IMR-90 (cell line): ENCODE measurements at regions of chr13 and their contacts with region 1.

Region 1: GRCh38 chr13:30132623-30133553 is 174.5 kb downstream of the KATNAL1 start:
- DNase-seq: peak; percentile 89
- ATAC-seq: peak; percentile 99
- H3K4me3 ChIP-seq: no peak overlapping the region
- H3K27ac ChIP-seq: no peak overlapping the region
- H3K4me1 ChIP-seq: peaks cover 8% of the 10 kb centered on the region
- H3K27me3 ChIP-seq: 0 out of 2 replicates have a peak, but pooled peaks cover 2% of the 10 kb centered on the region
- CTCF ChIP-seq: peak; percentile 94
- POLR2A ChIP-seq: peak; percentile 43; the same call in 1 of the 2 replicates
- RAD21 ChIP-seq: peak; percentile 96

Region 2: DNA sequence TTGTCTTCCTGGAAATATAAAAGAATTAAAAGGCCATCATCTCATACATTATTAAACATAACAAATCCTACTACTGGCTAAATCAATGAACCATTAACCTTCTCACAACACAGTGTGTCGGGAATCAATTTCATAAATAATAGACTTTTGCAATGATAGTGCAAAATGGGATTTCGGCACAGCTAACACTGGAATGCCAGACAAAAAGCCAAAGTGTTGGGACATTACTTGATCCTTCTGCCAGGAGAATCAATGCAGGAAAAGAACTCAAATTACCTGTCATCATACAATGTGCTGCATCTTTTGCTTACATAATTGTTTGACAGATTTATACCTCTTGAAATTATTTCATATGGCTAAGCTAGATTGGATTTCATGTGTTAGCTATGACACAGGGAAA is 978.5 kb before region 1 on chr13:
- CTCF ChIA-PET with region 1: no interaction called
- POLR2A ChIA-PET with region 1: no interaction called
- dilution Hi-C with region 1: no loop called
- in situ Hi-C with region 1: no loop called
- intact Hi-C with region 1: no loop called
- DNase-seq: no peak
- ATAC-seq: no peak
- H3K4me3 ChIP-seq: no peak overlapping the region
- H3K27ac ChIP-seq: no peak overlapping the region
- H3K4me1 ChIP-seq: no peaks in the 10 kb centered on the region
- H3K27me3 ChIP-seq: no peaks in the 10 kb centered on the region
- CTCF ChIP-seq: no peak
- POLR2A ChIP-seq: no peak
- RAD21 ChIP-seq: no peak

Region 3: DNA sequence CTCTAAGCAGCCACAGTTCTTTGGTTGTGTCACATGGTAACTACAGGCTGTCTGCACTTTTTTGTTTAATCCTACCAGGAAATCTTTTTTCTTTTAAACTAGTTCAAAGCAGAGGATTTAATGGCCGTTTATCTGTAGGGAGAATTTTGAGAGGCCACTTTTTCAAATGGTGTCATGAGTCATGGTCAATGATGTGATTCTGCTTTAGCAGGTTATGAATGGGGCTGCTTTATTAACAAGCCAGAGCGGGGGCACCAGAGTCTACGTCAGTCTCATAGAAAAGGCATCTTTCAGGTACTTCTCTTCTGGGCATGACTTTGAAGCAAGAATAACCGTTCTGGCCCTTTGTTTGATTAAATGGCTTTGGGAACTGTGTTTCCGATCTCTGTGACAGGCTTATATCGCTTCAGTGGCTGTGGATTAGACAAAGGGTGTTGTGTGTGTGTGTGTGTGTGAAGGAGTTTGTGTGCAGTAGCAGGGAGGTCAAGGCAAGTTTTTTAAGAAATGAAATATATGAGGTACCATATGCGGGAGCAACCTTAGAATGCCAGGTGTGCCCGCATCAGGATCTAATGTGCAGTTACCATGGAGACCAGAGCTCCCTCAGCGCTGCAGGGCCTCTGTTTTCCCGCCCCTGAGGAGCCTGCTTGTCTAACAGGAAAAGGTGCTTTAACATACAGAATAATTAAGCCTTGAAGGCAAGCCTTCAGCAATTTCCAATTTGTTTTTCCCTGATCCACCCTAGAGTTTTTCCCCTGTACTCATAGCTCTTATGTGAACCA is 53.9 kb after region 1 on chr13:
- CTCF ChIA-PET with region 1: no interaction called
- POLR2A ChIA-PET with region 1: no interaction called
- dilution Hi-C with region 1: no loop called
- in situ Hi-C with region 1: no loop called
- intact Hi-C with region 1: no loop called
- DNase-seq: peak; percentile 7
- ATAC-seq: no peak
- H3K4me3 ChIP-seq: no peak overlapping the region
- H3K27ac ChIP-seq: no peak overlapping the region
- H3K4me1 ChIP-seq: no peaks in the 10 kb centered on the region
- H3K27me3 ChIP-seq: no peaks in the 10 kb centered on the region
- CTCF ChIP-seq: no peak
- POLR2A ChIP-seq: no peak
- RAD21 ChIP-seq: no peak

Region 4: DNA sequence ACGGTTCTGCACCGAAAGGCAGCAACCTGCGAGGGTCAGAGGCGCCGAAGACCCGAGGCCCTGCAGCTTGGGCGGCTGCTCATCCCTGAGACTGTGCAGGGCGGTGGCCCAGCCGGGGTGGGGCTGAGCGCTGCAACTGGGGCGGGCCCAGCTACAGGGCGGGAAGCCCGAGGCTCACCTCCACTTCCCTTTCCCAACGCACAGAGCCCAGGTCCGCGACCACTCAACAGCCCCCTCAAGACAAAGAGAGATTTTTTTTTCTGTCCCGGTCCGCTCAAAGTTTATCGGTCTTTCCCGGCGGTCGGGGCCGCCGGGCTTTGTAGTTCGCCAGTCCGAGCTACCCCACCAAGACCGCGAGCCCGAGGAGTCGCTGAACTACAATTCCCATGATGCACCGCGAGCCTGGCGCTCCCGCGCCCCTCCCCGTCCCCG is 173.9 kb after region 1 on chr13:
- CTCF ChIA-PET with region 1: interaction called, 8 read pairs
- POLR2A ChIA-PET with region 1: no interaction called
- dilution Hi-C with region 1: no loop called
- in situ Hi-C with region 1: no loop called
- intact Hi-C with region 1: loop called (anchors 10 kb)
- DNase-seq: peak; percentile 91
- ATAC-seq: peak; percentile 96
- H3K4me3 ChIP-seq: peak overlapping the region; percentile 81
- H3K27ac ChIP-seq: peak overlapping the region; percentile 87
- H3K4me1 ChIP-seq: peaks cover 7% of the 10 kb centered on the region
- H3K27me3 ChIP-seq: no peaks in the 10 kb centered on the region
- CTCF ChIP-seq: no peak
- POLR2A ChIP-seq: peak; percentile 9; the same call in 1 of the 2 replicates
- RAD21 ChIP-seq: no peak

Region 5: GRCh38 chr13:30395192-30396084 is 262.6 kb after region 1 on chr13:
- CTCF ChIA-PET with region 1: no interaction called
- POLR2A ChIA-PET with region 1: no interaction called
- dilution Hi-C with region 1: no loop called
- in situ Hi-C with region 1: no loop called
- intact Hi-C with region 1: loop called (anchors 5 kb)
- DNase-seq: peak; percentile 93
- ATAC-seq: peak; percentile 85
- H3K4me3 ChIP-seq: peak overlapping the region; percentile 54
- H3K27ac ChIP-seq: peak overlapping the region; percentile 91
- H3K4me1 ChIP-seq: no peaks in the 10 kb centered on the region
- H3K27me3 ChIP-seq: no peaks in the 10 kb centered on the region
- CTCF ChIP-seq: no peak
- POLR2A ChIP-seq: no peak
- RAD21 ChIP-seq: no peak

Region 6: GRCh38 chr13:30465585-30466357 is 332.9 kb after region 1 on chr13 and contains the start of gene HMGB1:
- CTCF ChIA-PET with region 1: interaction called, 13 read pairs
- POLR2A ChIA-PET with region 1: no interaction called
- dilution Hi-C with region 1: no loop called
- in situ Hi-C with region 1: no loop called
- intact Hi-C with region 1: loop called (anchors 1 kb)
- DNase-seq: peak; percentile 99
- ATAC-seq: peak; percentile 89
- H3K4me3 ChIP-seq: peak within 1 kb of the TSS; percentile 74
- H3K27ac ChIP-seq: peak within 1 kb of the TSS; percentile 87
- H3K4me1 ChIP-seq: peaks cover 3% of the 10 kb centered on the region
- H3K27me3 ChIP-seq: no peaks in the 10 kb centered on the region
- CTCF ChIP-seq: no peak
- POLR2A ChIP-seq: peak; percentile 93
- RAD21 ChIP-seq: no peak
- total RNA-seq, gene HMGB1: 276 and 480 TPM in 2 replicates

Region 7: DNA sequence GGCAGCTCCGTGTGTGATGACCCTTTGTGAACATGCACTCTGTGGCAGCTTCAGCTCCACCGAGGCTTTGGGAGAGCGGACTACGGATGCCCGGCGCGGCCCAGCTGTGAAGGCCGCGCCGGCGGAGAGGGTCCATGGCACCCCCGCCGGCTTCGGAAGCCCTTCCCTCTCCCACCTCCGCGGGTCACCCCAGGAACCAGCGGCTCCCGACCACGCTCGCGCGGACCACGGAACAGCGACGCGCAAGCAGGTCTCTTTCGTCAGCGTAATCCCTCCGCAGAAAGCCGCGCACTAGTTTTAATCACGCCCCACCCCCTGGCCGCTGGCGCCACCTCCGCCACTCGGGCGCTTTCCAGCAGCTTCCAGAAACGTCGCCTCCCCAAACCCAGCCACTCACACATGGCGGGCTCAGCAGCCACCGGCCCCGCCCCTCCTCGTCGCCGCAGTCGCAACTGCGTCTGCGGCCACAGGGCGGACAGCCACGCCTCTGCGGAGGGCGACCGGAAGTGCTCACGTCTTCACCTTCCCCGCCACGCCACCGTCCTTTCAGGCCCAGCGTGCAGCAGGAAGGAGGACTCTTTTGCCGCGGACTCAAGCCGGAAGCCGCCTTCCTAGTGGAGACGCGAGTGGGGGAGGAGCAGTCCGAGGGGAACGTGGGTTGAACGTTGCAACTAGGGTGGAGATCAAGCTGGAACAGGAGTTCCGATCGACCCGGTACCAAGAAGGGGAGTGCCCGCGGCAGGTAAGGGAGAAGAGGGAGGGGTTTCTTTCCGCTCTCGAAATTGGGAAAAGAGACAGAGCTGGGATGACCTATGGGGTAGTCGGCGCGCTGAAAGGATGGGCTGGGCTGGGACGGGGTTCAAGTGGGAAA is 484.7 kb after region 1 on chr13 and contains the start of gene USPL1:
- CTCF ChIA-PET with region 1: interaction called, 4 read pairs
- POLR2A ChIA-PET with region 1: no interaction called
- dilution Hi-C with region 1: no loop called
- in situ Hi-C with region 1: no loop called
- intact Hi-C with region 1: loop called (anchors 2 kb)
- DNase-seq: peak; percentile 99
- ATAC-seq: peak; percentile 94
- H3K4me3 ChIP-seq: peak within 1 kb of the TSS; percentile 72
- H3K27ac ChIP-seq: peak within 1 kb of the TSS; percentile 92
- H3K4me1 ChIP-seq: no peaks in the 10 kb centered on the region; the same call in 1 of the 2 replicates
- H3K27me3 ChIP-seq: no peaks in the 10 kb centered on the region
- CTCF ChIP-seq: peak; percentile 22; the same call in 1 of the 2 replicates
- POLR2A ChIP-seq: peak; percentile 92
- RAD21 ChIP-seq: peak; percentile 31; the same call in 1 of the 2 replicates
- total RNA-seq, gene USPL1: 15.4 and 22.5 TPM in 2 replicates

Region 8: GRCh38 chr13:30802953-30803478 is 670.1 kb after region 1 on chr13:
- CTCF ChIA-PET with region 1: no interaction called
- POLR2A ChIA-PET with region 1: no interaction called
- dilution Hi-C with region 1: no loop called
- in situ Hi-C with region 1: loop called (anchors 10 kb)
- intact Hi-C with region 1: loop called (anchors 5 kb)
- DNase-seq: peak; percentile 70
- ATAC-seq: peak; percentile 88
- H3K4me3 ChIP-seq: no peak overlapping the region
- H3K27ac ChIP-seq: peak overlapping the region; percentile 10
- H3K4me1 ChIP-seq: peaks cover 24% of the 10 kb centered on the region
- H3K27me3 ChIP-seq: no peaks in the 10 kb centered on the region
- CTCF ChIP-seq: peak; percentile 89
- POLR2A ChIP-seq: no peak
- RAD21 ChIP-seq: peak; percentile 98

Region 9: DNA sequence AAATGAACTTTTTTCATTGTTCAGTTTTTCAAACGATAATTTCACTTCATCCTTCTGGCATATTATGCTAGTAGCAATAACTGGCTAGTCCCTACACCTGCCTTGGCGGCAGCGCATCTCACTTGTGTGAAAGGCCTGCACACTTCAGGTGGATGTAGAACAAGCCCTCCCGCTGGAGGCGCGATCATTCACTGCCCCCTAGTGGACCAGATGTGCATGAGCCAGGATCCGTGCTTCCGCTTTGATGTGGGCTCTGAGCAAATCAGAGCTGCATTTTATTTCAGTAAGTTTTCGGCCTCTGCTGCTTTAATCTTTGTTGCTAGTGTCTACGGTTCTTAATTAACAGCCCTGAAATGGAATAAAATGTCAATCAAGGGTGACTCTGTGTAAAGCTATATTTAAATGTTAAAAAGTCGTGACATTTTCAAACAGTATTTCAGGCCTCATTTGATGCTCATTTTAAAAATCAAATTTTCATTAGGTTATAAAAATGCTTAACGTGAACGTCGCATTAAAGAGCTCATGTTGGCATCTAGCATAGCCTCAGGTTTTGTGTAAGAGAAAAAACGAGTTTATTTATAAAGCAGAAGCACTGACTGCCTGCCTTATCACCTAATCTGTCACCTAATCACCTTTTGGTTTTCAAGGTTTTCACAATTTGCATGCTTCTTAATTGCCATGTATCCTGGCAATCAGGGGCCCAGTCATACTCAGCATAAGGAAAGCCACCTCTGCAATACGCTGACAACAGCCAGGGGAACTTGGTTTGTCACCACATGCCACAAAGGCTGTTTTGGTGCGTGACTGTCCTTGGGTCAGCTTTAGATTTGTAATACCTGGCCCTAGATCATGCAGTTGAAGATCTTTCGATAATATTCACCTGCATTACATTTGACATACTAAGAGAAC is 911.7 kb after region 1 on chr13:
- CTCF ChIA-PET with region 1: no interaction called
- POLR2A ChIA-PET with region 1: no interaction called
- dilution Hi-C with region 1: no loop called
- in situ Hi-C with region 1: loop called (anchors 25 kb)
- intact Hi-C with region 1: loop called (anchors 5 kb)
- DNase-seq: peak; percentile 81
- ATAC-seq: peak; percentile 72
- H3K4me3 ChIP-seq: no peak overlapping the region
- H3K27ac ChIP-seq: peak overlapping the region; percentile 80
- H3K4me1 ChIP-seq: peaks cover 20% of the 10 kb centered on the region
- H3K27me3 ChIP-seq: no peaks in the 10 kb centered on the region
- CTCF ChIP-seq: peak; percentile 97
- POLR2A ChIP-seq: peak; percentile 12; the same call in 1 of the 2 replicates
- RAD21 ChIP-seq: peak; percentile 99